ENCODE measurements at regions of chr4 and their contacts with region 1.

Region 1: DNA sequence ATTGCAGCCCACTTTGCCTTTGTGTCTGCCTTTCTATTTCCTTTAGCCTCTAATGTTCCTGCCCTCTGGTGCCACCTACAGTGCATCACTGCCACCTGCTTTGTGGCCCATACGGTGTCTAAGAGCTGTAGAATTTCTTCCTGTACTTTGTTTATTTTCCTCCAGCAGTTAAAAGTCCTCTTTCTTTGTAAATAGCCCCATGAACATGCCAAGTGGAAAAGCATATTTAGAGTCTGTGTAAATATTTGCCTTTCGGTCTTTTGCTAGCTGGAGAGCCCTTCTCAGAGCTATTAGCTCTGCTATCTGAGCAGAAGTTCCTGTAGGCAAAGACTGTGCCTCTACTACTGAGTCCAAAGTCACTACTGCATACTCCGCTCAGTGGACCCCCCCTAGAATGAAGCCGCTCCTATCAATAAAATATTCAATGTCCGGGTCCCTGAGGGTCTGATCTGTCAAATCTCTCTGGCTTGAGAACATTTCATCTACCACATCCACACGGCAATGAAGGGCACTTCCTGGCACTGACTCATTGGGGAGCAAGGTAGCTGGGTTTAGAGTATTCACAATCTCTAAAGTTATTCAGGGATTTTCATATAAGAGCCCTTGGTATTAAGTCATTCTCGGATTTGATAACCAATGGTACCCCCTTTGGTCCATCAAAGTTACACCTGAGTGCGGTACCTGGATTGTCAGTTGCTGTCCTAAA is 36.3 kb downstream of the SULT1E1 start:
- DNase-seq: peak; percentile 65
- H3K4me3 Mint-ChIP-seq: no peak overlapping the region
- H3K27ac Mint-ChIP-seq: no peak overlapping the region
- H3K4me1 Mint-ChIP-seq: no peaks in the 10 kb centered on the region
- H3K27me3 Mint-ChIP-seq: no peaks in the 10 kb centered on the region
- CTCF ChIP-seq: peak; percentile 64

Region 2: GRCh38 chr4:69689599-69689998 is 134.0 kb before region 1 on chr4:
- CTCF ChIA-PET with region 1: interaction called, 26 read pairs
- POLR2A ChIA-PET with region 1: interaction called, 4 read pairs
- intact Hi-C with region 1: loop called (anchors 1 kb)
- DNase-seq: peak; percentile 65
- H3K4me3 Mint-ChIP-seq: no peak overlapping the region
- H3K27ac Mint-ChIP-seq: no peak overlapping the region
- H3K4me1 Mint-ChIP-seq: no peaks in the 10 kb centered on the region
- H3K27me3 Mint-ChIP-seq: no peaks in the 10 kb centered on the region
- CTCF ChIP-seq: peak; percentile 45

Region 3: DNA sequence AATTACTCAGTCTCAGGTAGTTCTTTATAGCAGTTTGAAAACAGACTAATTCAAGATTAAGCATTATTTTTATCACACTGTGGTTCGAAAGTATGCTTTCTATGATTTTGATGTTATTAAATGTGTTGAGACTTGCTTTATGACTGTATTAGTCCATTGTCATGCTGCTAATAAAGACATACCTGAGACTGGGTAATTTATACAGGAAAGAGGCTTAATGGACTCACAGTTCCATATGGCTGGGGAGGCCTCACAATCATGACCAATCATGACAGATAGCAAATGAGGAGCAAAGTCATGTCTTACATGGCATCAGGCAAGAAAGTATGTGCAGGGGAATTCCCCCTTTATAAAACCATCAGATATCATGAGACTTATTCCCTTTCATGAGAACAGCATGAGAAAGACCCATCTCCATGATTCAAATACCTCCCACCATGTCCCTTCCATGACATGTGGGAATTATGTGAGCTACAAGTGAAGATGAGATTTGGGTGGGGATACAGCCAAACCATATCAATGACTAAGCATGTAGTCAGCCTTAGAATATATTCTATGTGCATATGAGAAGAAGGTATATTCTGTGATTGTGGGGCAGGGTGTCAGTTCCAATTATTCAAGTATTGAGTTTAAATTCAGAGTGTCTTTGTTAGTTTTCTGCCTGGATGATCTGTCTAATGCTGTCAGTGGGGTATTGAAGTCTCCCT is 125.9 kb before region 1 on chr4:
- CTCF ChIA-PET with region 1: interaction called, 36 read pairs
- POLR2A ChIA-PET with region 1: no interaction called
- intact Hi-C with region 1: no loop called
- DNase-seq: no peak
- H3K4me3 Mint-ChIP-seq: no peak overlapping the region
- H3K27ac Mint-ChIP-seq: no peak overlapping the region
- H3K4me1 Mint-ChIP-seq: no peaks in the 10 kb centered on the region
- H3K27me3 Mint-ChIP-seq: no peaks in the 10 kb centered on the region
- CTCF ChIP-seq: no peak

Region 4: GRCh38 chr4:69713593-69713992 is 110.0 kb before region 1 on chr4:
- CTCF ChIA-PET with region 1: interaction called, 23 read pairs
- POLR2A ChIA-PET with region 1: interaction called, 3 read pairs
- intact Hi-C with region 1: no loop called
- DNase-seq: peak; percentile 78
- H3K4me3 Mint-ChIP-seq: no peak overlapping the region
- H3K27ac Mint-ChIP-seq: peak overlapping the region; percentile 39
- H3K4me1 Mint-ChIP-seq: peaks cover 17% of the 10 kb centered on the region
- H3K27me3 Mint-ChIP-seq: no peaks in the 10 kb centered on the region
- CTCF ChIP-seq: no peak

Region 5: GRCh38 chr4:69760455-69760854 is 63.2 kb before region 1 on chr4 and contains the start of gene SULT1B1:
- CTCF ChIA-PET with region 1: interaction called, 11 read pairs
- POLR2A ChIA-PET with region 1: no interaction called
- intact Hi-C with region 1: no loop called
- DNase-seq: peak; percentile 33
- H3K4me3 Mint-ChIP-seq: no peak within 1 kb of the TSS
- H3K27ac Mint-ChIP-seq: peak within 1 kb of the TSS; percentile 77
- H3K4me1 Mint-ChIP-seq: peaks cover 19% of the 10 kb centered on the region
- H3K27me3 Mint-ChIP-seq: no peaks in the 10 kb centered on the region
- CTCF ChIP-seq: no peak
- total RNA-seq, gene SULT1B1: 0.20 and 0.21 TPM in 2 replicates

Region 6: DNA sequence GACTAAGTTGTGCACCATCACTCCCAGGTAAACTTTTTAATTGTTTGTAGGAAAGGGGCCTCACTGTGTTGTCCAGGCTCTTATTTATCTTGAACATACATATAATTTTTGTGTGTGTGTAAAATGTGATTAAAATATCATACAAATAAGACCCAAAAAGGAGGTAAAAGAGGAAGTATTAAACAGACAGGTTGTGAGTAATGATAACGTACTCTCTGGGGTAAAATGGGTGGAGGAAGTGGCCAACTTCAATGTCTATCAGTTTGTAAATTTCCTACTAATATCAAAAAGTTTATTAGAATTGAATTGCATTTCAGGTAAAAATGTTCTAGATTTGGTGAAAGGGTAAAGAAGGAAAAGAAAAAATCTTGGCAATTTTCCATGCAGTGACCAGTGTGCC is 12.5 kb before region 1 on chr4:
- CTCF ChIA-PET with region 1: interaction called, 14 read pairs
- POLR2A ChIA-PET with region 1: no interaction called
- intact Hi-C with region 1: no loop called
- DNase-seq: no peak
- H3K4me3 Mint-ChIP-seq: no peak overlapping the region
- H3K27ac Mint-ChIP-seq: no peak overlapping the region
- H3K4me1 Mint-ChIP-seq: no peaks in the 10 kb centered on the region
- H3K27me3 Mint-ChIP-seq: no peaks in the 10 kb centered on the region
- CTCF ChIP-seq: no peak

Region 7: DNA sequence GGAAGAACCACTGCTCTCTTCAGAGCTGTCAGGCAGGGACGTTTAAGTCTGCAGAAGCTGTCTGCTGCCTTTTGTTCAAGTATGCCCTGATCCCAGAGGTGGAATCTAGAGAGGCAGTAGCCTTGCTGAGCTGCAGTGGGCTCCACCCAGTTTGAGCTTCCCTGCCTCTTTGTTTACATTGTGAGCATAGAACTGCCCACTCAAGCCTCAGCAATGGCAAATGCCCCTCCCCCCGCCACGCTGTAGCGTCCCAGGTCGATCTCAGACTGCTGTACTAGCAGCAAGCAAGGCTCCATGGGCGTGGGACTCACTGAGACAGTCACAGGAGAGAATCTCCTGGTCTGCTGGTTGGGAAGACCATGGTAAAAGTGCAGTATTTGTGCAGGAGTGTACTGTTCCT is 613.6 kb after region 1 on chr4:
- CTCF ChIA-PET with region 1: no interaction called
- POLR2A ChIA-PET with region 1: no interaction called
- intact Hi-C with region 1: no loop called
- DNase-seq: no peak
- H3K4me3 Mint-ChIP-seq: no peak overlapping the region
- H3K27ac Mint-ChIP-seq: no peak overlapping the region
- H3K4me1 Mint-ChIP-seq: no peaks in the 10 kb centered on the region
- H3K27me3 Mint-ChIP-seq: peaks cover 20% of the 10 kb centered on the region
- CTCF ChIP-seq: no peak

Measured in MCF 10A (cell line).